ENCODE measurements at regions of chr5 and their contacts with region 1.

Region 1: DNA sequence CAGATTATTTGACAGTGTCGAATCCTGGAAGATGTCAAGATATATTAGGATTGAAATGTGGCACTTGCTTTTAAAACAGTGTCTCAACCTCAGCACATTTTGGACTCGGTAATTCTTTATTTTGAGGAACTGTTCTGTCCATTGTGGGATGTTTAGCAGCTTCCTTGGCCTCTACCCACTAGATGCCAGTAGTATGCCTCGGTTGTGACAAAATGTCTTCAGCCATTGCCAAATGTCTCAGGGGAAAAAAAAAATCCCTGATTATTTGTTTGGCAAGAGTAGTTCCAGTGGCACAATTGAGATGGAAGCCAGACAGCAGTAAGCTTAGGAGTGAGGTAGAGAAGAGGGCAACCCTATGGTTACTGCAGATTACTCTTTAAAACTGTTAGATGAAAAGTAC is 694.5 kb upstream of the RIOK2 start:
- DNase-seq: peak in 22 of 42 donors; percentile 5 to 68 (median 28)

Region 2: DNA sequence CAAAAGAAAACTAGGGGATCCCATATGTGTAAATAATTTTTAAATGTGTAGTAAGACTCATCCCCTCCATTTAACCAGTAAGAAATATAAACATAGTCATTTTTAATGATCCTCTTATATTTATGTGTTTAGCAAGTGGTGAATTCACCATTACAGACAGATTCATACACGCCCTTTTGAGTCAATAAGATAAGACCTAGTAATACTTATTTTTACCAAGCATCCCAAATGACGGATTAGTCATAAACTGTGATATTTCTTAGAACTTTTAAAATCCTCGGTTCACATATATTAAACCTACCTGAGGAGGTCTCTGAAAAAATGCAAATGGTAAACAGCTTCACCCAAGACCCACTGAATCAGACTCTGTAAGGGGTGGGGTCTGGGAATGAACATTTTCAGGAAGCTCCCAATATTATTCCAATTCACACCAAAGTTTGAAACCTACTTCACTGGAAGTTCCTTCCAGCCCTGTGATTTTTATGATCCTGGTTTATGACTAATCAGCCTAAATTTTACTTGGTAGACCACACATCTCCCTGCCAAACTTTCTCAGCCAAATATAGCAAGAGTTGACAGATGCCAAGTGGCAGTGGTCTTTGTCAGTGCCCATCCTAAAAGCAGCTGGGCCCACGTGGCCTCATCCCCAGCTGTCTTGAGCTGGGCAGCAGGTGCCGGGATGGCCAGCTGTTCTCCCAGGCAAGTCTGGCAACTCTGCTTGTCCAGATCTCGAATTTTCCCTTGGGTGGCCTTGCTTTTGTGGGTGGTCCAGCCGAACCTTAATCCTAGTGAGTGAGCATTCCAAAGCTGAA is 336.9 kb after region 1 on chr5:
- intact Hi-C with region 1: no loop called
- DNase-seq: no peak

Region 3: DNA sequence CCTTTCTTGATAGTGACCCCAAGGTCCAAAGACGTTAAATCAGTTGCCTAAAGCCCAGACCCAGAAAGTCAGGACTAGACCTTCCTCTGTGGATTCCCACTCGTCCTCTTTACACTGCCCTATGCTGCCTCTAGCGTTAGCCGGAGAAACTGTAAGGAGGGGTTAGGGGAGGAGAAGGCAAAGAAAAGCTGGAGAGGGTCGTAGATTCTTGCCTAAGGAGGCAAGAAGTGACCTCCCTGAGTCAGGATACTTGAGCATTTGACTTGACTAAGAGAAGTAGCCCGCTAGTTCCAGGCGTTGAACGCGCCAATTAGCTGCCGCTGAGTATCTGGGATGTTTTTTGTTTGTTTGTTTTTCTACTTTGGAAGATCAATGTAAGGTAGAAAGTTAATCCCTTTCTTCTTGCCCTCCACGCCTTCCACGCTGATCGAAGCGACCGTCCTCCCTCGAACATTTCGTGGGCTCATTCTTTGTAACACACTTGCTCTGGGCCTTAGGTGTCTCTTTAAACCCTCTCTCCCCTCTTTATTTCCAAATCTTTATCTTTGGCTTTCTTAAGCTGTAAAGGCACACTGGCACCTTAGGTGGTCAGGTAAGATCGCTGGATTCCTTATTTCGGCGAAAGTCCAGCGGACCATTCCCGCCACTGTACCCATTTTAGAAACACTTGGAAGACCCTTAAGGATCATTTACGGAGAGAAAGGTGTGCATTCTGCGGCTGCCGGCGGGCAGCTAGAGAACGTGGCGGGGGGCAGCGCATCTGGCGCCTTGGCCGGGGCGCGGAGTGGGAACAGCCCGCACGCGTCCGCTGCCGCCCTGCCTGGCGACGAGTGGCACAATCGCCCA is 890.8 kb after region 1 on chr5:
- intact Hi-C with region 1: loop called (anchors 5 kb)
- DNase-seq: peak in 39 of 42 donors; percentile 13 to 87 (median 70)

Measured in head of caudate nucleus (tissue), 42 donors.